H1 (cell line): ENCODE measurements at regions of chr11 and their contacts with region 1.

Region 1: GRCh38 chr11:72328366-72329224 is 84.6 kb upstream of the PHOX2A start:
- DNase-seq: no peak
- H3K4me3 ChIP-seq: no peak overlapping the region
- H3K27ac ChIP-seq: no peak overlapping the region
- H3K4me1 ChIP-seq: peaks cover 2 to 6% (median 4%) of the 10 kb centered on the region in 4 experiments; a peak in 6 of 7 replicates
- H3K27me3 ChIP-seq: no peaks in the 10 kb centered on the region
- CTCF ChIP-seq: no peak; a peak in 1 of 4 replicates
- EP300 ChIP-seq: no peak
- POLR2A ChIP-seq: no peak
- RAD21 ChIP-seq: peak; percentile 13 to 45; a peak in 2 of 4 replicates

Region 2: GRCh38 chr11:72314600-72315392 is 13.8 kb before region 1 on chr11:
- CTCF ChIA-PET with region 1: interaction called, 20 read pairs
- POLR2A ChIA-PET with region 1: interaction called, 6 read pairs
- DNase-seq: no peak
- H3K4me3 ChIP-seq: no peak overlapping the region
- H3K27ac ChIP-seq: 0 out of 2 replicates have a peak overlapping the region, but pooled peaks have one; percentile 3
- H3K4me1 ChIP-seq: peaks cover 0 to 8% (median 5%) of the 10 kb centered on the region in 4 experiments; a peak in 6 of 7 replicates
- H3K27me3 ChIP-seq: no peaks in the 10 kb centered on the region
- CTCF ChIP-seq: no peak
- EP300 ChIP-seq: no peak
- POLR2A ChIP-seq: no peak
- RAD21 ChIP-seq: no peak